CD14-positive monocyte (primary cell): ENCODE measurements at regions of chr15 and their contacts with region 1.

Region 1: GRCh38 chr15:50145451-50145872 is 26.4 kb upstream of the ATP8B4 start:
- DNase-seq: peak in 2 of 3 donors; percentile 65 to 74
- H3K4me3 ChIP-seq: no peak overlapping the region
- H3K4me3 Mint-ChIP-seq: no peak overlapping the region
- H3K27ac ChIP-seq: no peak overlapping the region
- H3K27ac Mint-ChIP-seq: peak overlapping the region in 3 of 7 donors; percentile 63 to 87 (median 81)
- H3K4me1 ChIP-seq: peaks cover 11 to 24% of the 10 kb centered on the region in 2 donors
- H3K4me1 Mint-ChIP-seq: peaks cover 27% of the 10 kb centered on the region
- H3K27me3 ChIP-seq: no peaks in the 10 kb centered on the region
- H3K27me3 Mint-ChIP-seq: peaks cover 0 to 2% (median 0%) of the 10 kb centered on the region in 3 donors
- CTCF ChIP-seq: peak; percentile 87

Region 2: DNA sequence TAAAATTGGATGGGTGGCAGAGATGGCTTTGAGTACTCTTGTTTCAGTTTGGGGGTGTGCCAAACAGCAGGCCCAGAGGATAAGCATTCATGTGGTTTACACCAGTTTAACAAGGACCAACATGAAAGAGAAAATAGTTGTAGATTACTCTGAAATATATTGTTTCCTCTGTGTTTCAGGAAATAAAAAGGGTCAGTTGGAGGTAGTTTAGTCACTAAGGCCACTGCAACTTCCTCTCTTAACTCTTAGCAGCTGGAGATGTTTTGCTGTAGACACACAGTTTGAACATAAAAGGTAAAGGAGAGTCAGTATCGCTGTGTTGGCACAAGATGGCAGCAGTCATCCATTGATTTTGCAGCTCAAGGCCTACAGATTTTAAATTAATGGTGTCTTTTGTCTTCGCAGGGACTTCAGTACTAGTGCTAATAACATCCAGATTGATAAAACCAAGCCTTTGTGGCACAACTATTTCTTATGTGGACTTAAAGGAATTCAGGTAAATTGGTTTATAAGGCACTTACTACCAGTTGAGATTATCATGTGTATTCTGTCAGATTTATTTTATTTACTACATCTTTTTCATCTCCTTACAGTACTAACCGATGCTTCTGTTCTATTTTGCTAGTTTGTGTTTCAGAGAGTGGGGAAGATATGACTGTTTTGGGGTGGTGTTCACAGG is 909.9 kb before region 1 on chr15:
- intact Hi-C with region 1: loop called (anchors 10 kb)
- DNase-seq: peak; percentile 65 to 69 (median 66)
- H3K4me3 ChIP-seq: peak overlapping the region in 1 of 3 experiments; percentile 28
- H3K4me3 Mint-ChIP-seq: peak overlapping the region in 1 of 2 donors; percentile 5
- H3K27ac ChIP-seq: peak overlapping the region in 1 of 2 donors; percentile 72
- H3K27ac Mint-ChIP-seq: peak overlapping the region; percentile 77 to 90 (median 83)
- H3K4me1 ChIP-seq: peaks cover 22 to 27% of the 10 kb centered on the region in 2 donors
- H3K4me1 Mint-ChIP-seq: peaks cover 28% of the 10 kb centered on the region
- H3K27me3 ChIP-seq: no peaks in the 10 kb centered on the region
- H3K27me3 Mint-ChIP-seq: no peaks in the 10 kb centered on the region
- CTCF ChIP-seq: peak; percentile 75

Region 3: DNA sequence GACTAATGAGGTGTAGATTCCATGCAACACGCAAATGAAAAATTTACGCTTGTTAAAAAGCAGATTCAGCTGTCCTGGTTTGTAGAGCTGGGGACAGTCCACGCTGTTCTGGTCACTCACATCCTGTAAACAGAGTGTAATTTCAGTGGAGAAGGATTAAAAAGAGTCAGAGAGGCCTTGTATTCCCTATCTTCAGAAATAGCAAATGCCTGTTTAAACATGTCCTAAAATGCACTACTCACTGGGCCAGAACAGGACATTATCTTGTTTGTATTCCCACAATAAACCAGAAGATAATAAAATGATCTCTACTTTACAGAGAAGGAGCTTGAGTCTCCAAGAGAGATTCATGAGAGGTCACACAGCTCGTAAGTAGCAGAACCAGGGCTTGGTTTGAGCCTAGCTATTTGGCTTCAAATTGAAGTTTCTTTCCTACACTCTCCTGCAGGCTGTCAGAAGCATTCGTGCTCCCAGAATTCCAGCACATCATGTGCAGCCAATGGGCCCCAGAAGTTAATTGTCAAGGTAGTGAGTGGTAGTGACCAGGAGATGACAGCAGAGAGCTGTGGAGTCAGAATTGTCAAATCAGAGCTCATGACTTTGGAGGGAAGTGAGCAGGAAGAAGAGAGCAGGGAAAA is 268.9 kb before region 1 on chr15:
- intact Hi-C with region 1: loop called in 1 of 2 experiments (anchors 10 kb)
- DNase-seq: peak in 2 of 3 donors; percentile 1 to 15
- H3K4me3 ChIP-seq: no peak overlapping the region
- H3K4me3 Mint-ChIP-seq: no peak overlapping the region
- H3K27ac ChIP-seq: peak overlapping the region in 1 of 2 donors; percentile 21
- H3K27ac Mint-ChIP-seq: peak overlapping the region in 6 of 7 donors; percentile 3 to 74 (median 24)
- H3K4me1 ChIP-seq: no peaks in the 10 kb centered on the region
- H3K4me1 Mint-ChIP-seq: peaks cover 2% of the 10 kb centered on the region
- H3K27me3 ChIP-seq: no peaks in the 10 kb centered on the region
- H3K27me3 Mint-ChIP-seq: no peaks in the 10 kb centered on the region
- CTCF ChIP-seq: peak; percentile 44

Region 4: DNA sequence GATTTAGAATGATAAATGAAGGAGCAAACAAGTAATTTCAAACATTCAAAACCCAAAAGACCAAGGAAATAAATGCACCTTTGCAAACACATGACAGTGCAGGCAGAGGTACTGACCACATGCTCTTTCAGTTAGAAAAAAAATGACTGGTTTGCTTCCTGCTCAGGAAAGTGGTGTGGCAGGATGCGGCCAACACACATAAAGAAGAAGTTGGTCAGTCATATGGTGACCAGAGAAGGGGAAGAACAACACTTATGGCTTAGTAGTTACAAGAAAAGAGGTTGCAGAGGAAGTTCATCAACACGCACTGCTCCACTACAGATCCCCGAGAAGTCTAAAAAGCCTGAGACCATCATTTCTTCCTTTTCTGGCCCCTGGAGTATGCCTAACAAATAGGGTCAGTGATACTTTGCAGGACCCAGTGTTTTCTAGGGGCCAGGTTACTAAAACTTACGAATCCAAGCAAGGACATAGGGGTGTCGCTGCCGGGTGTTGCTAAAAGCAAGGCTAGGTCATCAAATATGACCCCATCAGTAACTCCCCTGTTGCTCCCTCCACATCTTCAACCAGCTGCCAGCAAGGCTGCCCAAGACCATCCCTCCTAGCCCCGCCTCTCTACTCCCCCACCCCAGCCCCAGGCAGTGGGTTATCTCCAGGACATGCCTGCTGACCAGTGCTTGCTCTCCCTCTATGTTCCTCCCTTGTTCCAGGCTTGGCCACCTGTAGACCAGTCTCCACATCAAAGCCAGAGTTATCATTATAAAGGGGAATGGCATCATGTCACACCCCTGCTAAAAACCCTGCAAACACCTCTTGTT is 37.7 kb before region 1 on chr15:
- intact Hi-C with region 1: no loop called
- DNase-seq: peak; percentile 90 to 95 (median 94)
- H3K4me3 ChIP-seq: peak overlapping the region; percentile 14 to 76 (median 40)
- H3K4me3 Mint-ChIP-seq: peak overlapping the region; percentile 45 to 93
- H3K27ac ChIP-seq: peak overlapping the region; percentile 93 to 95
- H3K27ac Mint-ChIP-seq: peak overlapping the region; percentile 95 to 98 (median 96)
- H3K4me1 ChIP-seq: peaks cover 68 to 82% of the 10 kb centered on the region in 2 donors
- H3K4me1 Mint-ChIP-seq: peaks cover 85% of the 10 kb centered on the region
- H3K27me3 ChIP-seq: no peaks in the 10 kb centered on the region
- H3K27me3 Mint-ChIP-seq: peaks cover 0 to 1% (median 0%) of the 10 kb centered on the region in 3 donors
- CTCF ChIP-seq: no peak